ENCODE measurements at regions of chr5 and their contacts with region 1.

Region 1: GRCh38 chr5:168836603-168837231 is 257.5 kb upstream of the PANK3 start:
- DNase-seq: peak; percentile 59
- ATAC-seq: peak; percentile 84
- H3K4me3 Mint-ChIP-seq: peak overlapping the region; percentile 73
- H3K27ac Mint-ChIP-seq: peak overlapping the region; percentile 90
- H3K4me1 Mint-ChIP-seq: peaks cover 59% of the 10 kb centered on the region
- H3K27me3 Mint-ChIP-seq: peaks cover 11% of the 10 kb centered on the region

Region 2: DNA sequence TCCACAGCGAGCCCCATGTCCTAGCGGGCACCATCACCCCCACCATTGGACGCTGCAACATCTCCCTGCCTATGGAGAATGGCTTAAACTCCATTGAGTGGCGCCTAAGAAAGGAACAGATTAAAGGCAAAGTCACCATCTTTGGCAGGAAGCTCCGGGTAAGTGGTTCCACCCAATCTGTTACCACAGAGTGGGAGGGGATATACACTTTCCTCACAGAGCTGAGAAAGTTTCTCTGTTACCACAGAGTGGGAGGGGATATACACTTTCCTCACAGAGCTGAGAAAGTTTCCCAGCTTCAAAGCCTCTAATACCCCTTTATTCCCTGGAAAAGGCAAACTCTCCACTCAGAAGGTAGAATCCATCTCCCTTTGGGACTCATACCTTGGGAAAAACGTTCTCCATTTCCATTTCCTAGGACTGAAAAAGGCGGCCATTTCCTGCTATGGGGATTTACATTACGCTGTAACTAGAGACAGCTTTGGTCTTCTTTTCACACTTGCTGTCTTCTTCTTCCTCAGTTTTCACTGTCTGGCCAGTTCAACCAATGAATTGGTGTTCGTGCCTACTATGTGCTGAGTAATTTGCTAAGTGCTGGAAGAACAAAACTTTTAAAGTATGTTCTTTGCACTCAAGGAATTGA is 608.6 kb before region 1 on chr5:
- CTCF ChIA-PET with region 1: no interaction called
- POLR2A ChIA-PET with region 1: no interaction called
- intact Hi-C with region 1: loop called in 1 of 2 experiments (anchors 2 kb)
- DNase-seq: peak; percentile 52
- ATAC-seq: peak; percentile 93
- H3K4me3 Mint-ChIP-seq: no peak overlapping the region
- H3K27ac Mint-ChIP-seq: peak overlapping the region; percentile 62
- H3K4me1 Mint-ChIP-seq: peaks cover 28% of the 10 kb centered on the region
- H3K27me3 Mint-ChIP-seq: peaks cover 5% of the 10 kb centered on the region

Region 3: GRCh38 chr5:168793841-168794837 is 42.6 kb before region 1 on chr5:
- CTCF ChIA-PET with region 1: no interaction called
- POLR2A ChIA-PET with region 1: no interaction called
- intact Hi-C with region 1: loop called (anchors 1 to 2 kb)
- DNase-seq: peak; percentile 81
- ATAC-seq: peak; percentile 77
- H3K4me3 Mint-ChIP-seq: no peak overlapping the region
- H3K27ac Mint-ChIP-seq: peak overlapping the region; percentile 90
- H3K4me1 Mint-ChIP-seq: peaks cover 58% of the 10 kb centered on the region
- H3K27me3 Mint-ChIP-seq: no peaks in the 10 kb centered on the region

Region 4: DNA sequence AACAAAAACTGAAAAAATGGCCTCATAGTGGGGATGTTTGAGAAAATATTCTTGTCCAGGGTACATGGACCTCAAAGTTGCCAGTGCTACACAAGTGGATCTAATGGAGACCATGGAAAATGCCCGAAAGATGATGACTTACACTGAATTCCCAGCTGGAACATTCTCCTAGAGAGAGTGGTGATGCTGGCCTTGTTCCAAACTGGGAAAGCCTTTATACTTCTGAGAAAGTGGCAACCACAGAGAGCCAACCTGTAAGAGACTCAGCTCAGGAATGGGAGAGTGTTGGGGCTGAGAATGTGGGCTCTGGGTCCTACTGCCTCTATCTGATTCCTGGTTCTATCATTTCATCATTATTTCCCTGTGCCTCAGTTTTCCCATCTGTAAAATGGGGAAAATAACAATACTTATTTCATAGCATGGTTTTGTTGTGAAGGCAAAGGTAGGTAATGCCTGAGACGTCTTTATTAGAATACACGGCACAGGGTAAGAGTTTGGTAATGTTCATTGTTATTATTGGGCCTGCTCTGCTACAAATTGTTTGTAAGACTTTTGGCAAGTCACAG is 28.6 kb before region 1 on chr5:
- CTCF ChIA-PET with region 1: no interaction called
- POLR2A ChIA-PET with region 1: no interaction called
- intact Hi-C with region 1: no loop called
- DNase-seq: no peak
- ATAC-seq: no peak
- H3K4me3 Mint-ChIP-seq: no peak overlapping the region
- H3K27ac Mint-ChIP-seq: no peak overlapping the region
- H3K4me1 Mint-ChIP-seq: peaks cover 6% of the 10 kb centered on the region
- H3K27me3 Mint-ChIP-seq: peaks cover 14% of the 10 kb centered on the region

Region 5: DNA sequence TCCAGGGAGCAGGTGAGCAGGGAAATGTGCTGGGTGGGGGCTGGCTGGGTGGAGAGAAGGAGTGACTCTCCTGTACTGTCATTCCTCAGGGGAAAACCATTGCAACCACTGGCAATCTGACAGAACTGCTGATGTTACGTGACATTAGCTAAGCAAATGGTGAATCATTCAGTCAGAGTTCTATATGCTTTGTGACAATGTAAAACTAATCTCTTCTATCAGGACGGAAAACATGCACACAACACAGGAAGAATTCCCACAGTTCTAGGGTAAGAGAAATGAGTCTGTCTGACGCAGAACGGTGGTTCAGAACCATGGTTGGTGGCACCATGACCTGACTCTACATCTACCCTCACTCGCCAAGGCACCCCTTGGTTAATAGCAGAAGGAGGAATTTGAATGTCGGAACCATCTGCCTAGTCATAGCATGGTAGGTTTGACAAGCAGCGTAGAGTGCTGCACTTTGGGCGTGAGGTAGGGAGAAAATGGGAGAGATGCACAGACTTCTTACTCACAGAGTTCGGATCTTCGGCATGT is 13.9 kb before region 1 on chr5:
- CTCF ChIA-PET with region 1: interaction called, 7 read pairs
- POLR2A ChIA-PET with region 1: interaction called, 7 read pairs
- intact Hi-C with region 1: loop called (anchors 1 kb)
- DNase-seq: peak; percentile 71
- ATAC-seq: peak; percentile 88
- H3K4me3 Mint-ChIP-seq: peak overlapping the region; percentile 58
- H3K27ac Mint-ChIP-seq: peak overlapping the region; percentile 94
- H3K4me1 Mint-ChIP-seq: peaks cover 36% of the 10 kb centered on the region
- H3K27me3 Mint-ChIP-seq: peaks cover 6% of the 10 kb centered on the region

Region 6: DNA sequence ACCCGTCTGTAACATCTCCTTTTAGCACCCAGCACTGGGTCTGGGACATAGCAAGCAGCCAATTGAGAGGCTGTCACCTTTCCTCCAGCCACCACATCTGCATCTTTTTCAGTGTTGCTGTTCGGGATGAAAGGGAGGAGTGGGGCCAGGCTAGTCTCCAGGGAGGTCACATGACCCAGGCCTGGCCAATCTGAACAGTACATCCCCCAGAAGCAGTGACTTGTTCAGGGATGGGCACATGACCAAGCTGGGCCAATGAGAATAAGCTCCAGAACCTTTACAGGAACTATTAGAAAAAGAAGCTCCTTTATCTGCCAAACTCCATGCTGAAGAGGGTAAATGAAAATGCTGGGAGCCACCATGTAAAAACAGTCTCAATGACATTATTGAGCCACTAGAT is 105.2 kb after region 1 on chr5:
- CTCF ChIA-PET with region 1: interaction called, 3 read pairs
- POLR2A ChIA-PET with region 1: no interaction called
- intact Hi-C with region 1: loop called in 1 of 2 experiments (anchors 5 kb)
- DNase-seq: no peak
- ATAC-seq: no peak
- H3K4me3 Mint-ChIP-seq: no peak overlapping the region
- H3K27ac Mint-ChIP-seq: no peak overlapping the region
- H3K4me1 Mint-ChIP-seq: peaks cover under 1% of the 10 kb centered on the region
- H3K27me3 Mint-ChIP-seq: no peaks in the 10 kb centered on the region

Region 7: DNA sequence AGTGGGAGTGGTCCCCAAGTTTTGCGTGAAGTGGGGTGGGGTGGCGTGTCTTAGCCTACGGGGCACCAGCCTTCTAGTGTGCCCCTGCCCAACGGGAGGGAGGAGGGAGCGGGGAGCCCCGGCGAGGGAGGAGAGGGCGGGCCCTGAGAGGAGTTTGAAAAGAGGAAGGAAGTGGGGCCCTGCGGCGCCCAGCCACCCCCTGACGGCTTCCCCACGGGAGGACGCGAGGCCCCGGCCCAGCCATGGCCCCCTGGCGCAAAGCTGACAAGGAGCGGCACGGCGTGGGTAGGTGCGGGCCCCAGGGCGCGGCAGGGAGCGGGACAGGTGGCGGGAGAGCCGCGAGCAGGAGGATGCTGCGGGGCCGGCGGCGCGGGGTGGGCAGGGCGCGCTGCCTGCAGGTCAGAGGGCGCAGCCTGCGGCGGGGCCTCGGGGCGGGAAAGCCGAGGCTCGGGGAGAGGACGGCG is 800.4 kb after region 1 on chr5 and contains the start of gene DOCK2:
- CTCF ChIA-PET with region 1: no interaction called
- POLR2A ChIA-PET with region 1: no interaction called
- intact Hi-C with region 1: loop called in 1 of 2 experiments (anchors 5 kb)
- DNase-seq: peak; percentile 82
- ATAC-seq: peak; percentile 77
- H3K4me3 Mint-ChIP-seq: peak within 1 kb of the TSS; percentile 89
- H3K27ac Mint-ChIP-seq: peak within 1 kb of the TSS; percentile 94
- H3K4me1 Mint-ChIP-seq: peaks cover 46% of the 10 kb centered on the region
- H3K27me3 Mint-ChIP-seq: no peaks in the 10 kb centered on the region
- total RNA-seq, gene DOCK2: 189 to 198 TPM

Region 8: GRCh38 chr5:169805527-169805934 is 968.8 kb after region 1 on chr5:
- CTCF ChIA-PET with region 1: no interaction called
- POLR2A ChIA-PET with region 1: interaction called, 6 read pairs
- intact Hi-C with region 1: loop called in 1 of 2 experiments (anchors 5 kb)
- DNase-seq: peak; percentile 82
- ATAC-seq: peak; percentile 90
- H3K4me3 Mint-ChIP-seq: peak overlapping the region; percentile 38
- H3K27ac Mint-ChIP-seq: peak overlapping the region; percentile 98
- H3K4me1 Mint-ChIP-seq: peaks cover 51% of the 10 kb centered on the region
- H3K27me3 Mint-ChIP-seq: no peaks in the 10 kb centered on the region

Measured in activated CD4-positive, alpha-beta T cell treated with anti-CD3 and anti-CD28 coated beads for 36 hours (primary cell).